ENCODE measurements at regions of chr9 and their contacts with region 1.

Region 1: DNA sequence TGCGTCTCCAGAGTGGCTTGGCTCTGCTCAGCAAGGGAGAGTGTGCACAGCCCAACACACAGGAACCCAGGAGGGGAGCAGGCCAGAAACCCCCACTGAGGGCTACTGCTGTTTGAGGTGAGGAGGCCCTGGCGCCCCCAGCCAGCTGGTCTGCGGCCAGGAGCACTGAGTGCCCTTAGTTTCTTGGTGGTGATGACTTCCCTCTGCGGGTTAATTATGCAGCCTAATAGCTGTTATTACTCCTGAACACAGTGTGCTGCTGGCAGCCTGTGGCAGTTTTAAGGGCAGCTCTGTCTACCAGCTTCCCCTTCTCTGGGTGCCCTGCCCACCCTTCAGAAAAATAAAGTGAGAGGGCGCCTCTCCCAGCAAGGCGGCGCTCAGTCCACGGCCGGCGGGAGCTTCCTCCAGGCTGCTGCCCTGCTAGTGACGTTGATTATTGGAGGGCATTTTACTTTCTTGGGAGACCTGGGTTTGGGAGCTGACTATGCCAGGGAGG is 19.2 kb downstream of the GADD45G start:
- DNase-seq: no peak
- H3K4me3 ChIP-seq: no peak overlapping the region
- H3K27ac ChIP-seq: no peak overlapping the region
- H3K4me1 ChIP-seq: peaks cover 0 to 17% (median under 1%) of the 10 kb centered on the region in 4 experiments; a peak in 5 of 7 replicates
- H3K27me3 ChIP-seq: no peaks in the 10 kb centered on the region; a peak in 3 of 7 replicates
- CTCF ChIP-seq: no peak
- EP300 ChIP-seq: no peak
- POLR2A ChIP-seq: no peak
- RAD21 ChIP-seq: no peak

Region 2: DNA sequence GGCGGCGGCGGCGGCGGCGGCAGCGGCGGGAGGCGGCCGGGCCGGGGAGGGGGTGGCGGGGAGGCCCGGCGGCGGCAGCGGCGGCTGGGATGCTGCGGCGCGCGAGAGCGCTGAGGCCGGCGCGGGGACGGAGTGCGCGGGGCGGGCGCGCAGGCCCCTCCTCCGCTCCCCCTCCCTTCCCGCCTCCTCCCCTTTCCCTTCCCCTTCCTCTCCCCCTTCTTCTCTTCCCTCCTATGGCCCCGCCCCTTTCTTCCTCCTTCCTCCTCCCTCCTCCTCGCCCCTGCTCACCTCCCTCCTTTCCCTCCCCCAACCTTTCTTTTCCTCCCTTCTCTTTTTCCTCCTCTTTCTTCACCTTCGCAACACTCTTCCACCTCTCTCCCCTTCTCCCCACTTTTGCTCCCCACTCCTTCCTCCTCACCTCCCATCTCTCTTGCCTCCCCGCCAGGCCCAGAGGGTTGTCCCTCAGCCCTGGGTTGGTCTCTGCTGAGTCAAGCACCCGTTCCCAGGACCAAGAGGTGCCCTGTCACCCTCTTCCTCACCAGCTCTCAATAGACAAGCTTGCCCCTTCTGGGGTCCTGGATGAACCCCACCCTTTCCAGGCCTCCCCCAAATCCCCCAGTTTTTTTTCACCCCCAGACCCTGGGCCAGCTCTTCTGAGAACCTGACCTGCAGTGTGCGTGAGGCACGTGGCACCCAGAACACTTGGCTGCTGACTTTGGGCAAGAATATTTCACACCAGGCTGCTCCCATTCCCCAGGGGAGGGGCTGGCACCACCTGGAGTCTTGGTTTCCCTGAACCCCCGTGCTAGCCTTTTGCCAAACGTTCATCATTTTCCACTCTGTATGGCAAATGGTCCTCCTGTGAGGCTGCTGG is 125.8 kb before region 1 on chr9 and contains the start of gene SEMA4D:
- CTCF ChIA-PET with region 1: no interaction called
- POLR2A ChIA-PET with region 1: no interaction called
- DNase-seq: peak; percentile 21 to 78
- H3K4me3 ChIP-seq: peak within 1 kb of the TSS; percentile 55 to 90 (median 66)
- H3K27ac ChIP-seq: peak within 1 kb of the TSS; percentile 12; the same call in 1 of the 2 replicates
- H3K4me1 ChIP-seq: peaks cover 14 to 42% (median 28%) of the 10 kb centered on the region in 4 experiments
- H3K27me3 ChIP-seq: no peaks in the 10 kb centered on the region
- CTCF ChIP-seq: no peak
- EP300 ChIP-seq: no peak
- POLR2A ChIP-seq: no peak
- RAD21 ChIP-seq: no peak
- total RNA-seq, gene SEMA4D: 63.1 and 70.4 TPM in 2 replicates

Region 3: GRCh38 chr9:89608651-89609345 is 15.2 kb before region 1 on chr9:
- CTCF ChIA-PET with region 1: interaction called, 65 read pairs
- POLR2A ChIA-PET with region 1: interaction called, 107 read pairs
- DNase-seq: no peak
- H3K4me3 ChIP-seq: no peak overlapping the region
- H3K27ac ChIP-seq: no peak overlapping the region
- H3K4me1 ChIP-seq: peaks cover 0 to 12% (median 10%) of the 10 kb centered on the region in 4 experiments; a peak in 6 of 7 replicates
- H3K27me3 ChIP-seq: peaks cover 0 to 16% (median 14%) of the 10 kb centered on the region in 4 experiments; a peak in 5 of 7 replicates
- CTCF ChIP-seq: no peak
- EP300 ChIP-seq: no peak
- POLR2A ChIP-seq: no peak
- RAD21 ChIP-seq: no peak

Region 4: DNA sequence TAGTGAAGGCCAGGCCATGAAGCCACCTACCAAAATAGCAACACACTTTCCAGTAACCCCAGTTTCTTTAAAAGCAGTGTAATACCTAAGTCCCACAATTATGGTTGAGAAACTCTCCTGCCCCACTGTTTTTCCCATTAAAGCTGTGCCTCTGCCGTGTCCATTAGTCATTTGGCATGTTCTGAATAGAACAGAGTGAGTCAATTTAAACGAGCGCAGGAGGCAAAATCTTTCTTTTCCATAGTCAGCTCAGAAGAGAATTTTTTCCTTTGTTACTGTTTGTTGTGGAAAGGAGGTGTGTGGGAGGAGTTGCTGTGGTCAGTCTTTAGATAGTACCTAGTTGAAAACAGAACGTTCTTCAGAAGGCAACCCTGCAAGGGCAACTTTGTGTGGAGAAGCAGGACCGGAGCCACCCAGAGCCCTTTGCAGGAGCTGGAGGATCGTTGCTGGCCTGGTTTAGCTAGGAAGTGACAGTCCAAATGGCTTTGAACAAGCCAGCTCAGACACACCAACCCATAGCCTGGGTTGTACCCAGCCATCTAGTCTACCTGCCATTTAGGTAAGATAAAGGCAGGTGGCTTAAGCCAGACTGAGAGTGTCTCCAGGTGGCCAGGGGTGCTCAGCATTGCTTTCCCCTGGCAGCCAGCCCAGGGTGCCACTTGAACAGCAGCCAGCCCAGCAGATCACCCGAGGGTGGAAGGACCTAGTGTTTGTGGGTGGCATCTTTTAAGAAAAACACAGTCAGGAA is 11.2 kb after region 1 on chr9:
- CTCF ChIA-PET with region 1: interaction called, 15 read pairs
- POLR2A ChIA-PET with region 1: interaction called, 3 read pairs
- DNase-seq: no peak
- H3K4me3 ChIP-seq: no peak overlapping the region
- H3K27ac ChIP-seq: no peak overlapping the region
- H3K4me1 ChIP-seq: peaks cover 0 to 5% (median 0%) of the 10 kb centered on the region in 4 experiments; a peak in 4 of 7 replicates
- H3K27me3 ChIP-seq: peaks cover 0 to 2% (median 0%) of the 10 kb centered on the region in 4 experiments; a peak in 2 of 7 replicates
- CTCF ChIP-seq: no peak
- EP300 ChIP-seq: no peak
- POLR2A ChIP-seq: no peak
- RAD21 ChIP-seq: no peak

Region 5: GRCh38 chr9:89642789-89643188 is 18.8 kb after region 1 on chr9:
- CTCF ChIA-PET with region 1: interaction called, 11 read pairs
- POLR2A ChIA-PET with region 1: no interaction called
- DNase-seq: no peak
- H3K4me3 ChIP-seq: no peak overlapping the region
- H3K27ac ChIP-seq: no peak overlapping the region
- H3K4me1 ChIP-seq: peaks cover 0 to 6% (median 0%) of the 10 kb centered on the region in 4 experiments; a peak in 4 of 7 replicates
- H3K27me3 ChIP-seq: no peaks in the 10 kb centered on the region
- CTCF ChIP-seq: no peak
- EP300 ChIP-seq: no peak
- POLR2A ChIP-seq: no peak
- RAD21 ChIP-seq: no peak

Measured in H1 (cell line).